HEK293T (cell line): ENCODE measurements at regions of chr1 and their contacts with region 1.

Region 1: DNA sequence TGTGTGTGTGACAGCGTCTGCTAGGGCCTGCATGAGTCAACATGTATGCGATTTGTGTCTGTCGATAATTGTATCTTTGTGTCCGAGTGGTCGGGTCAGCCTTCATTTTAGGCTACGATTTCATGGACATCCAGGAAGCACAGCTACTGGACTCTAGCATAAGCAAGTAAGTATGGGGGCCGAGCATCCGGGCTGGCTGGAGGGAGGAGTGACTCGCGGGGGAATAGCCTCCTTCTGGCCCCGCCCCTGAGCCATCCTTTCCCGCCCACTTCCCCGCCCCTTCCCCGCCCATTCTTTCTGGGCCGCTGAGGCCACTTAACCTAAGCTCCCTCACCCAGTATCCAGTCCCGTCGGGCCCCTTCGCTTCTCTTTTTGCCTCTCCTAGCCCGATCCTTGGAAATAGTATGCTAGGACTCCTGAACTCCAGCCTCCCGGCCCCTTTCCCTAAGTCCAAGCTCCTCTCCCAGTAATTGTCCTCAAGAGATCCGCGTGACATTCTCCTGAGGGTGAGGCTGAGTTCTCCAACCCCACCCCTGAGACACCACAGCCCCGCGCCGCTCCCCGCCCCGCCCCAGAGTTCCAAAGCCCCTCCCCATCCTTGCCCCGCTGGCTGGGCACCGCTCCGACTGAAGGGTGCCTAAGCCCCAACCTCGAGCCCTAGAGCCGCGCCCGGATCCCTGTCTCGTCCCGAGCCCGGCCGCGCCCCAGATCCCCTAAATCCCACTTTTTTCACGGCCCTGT is 1.2 kb downstream of the MAP3K6 start:
- DNase-seq: peak; percentile 90

Region 2: GRCh38 chr1:27321813-27322577 is 43.5 kb before region 1 on chr1 and contains the start of gene TMEM222:
- CTCF ChIA-PET with region 1: no interaction called
- POLR2A ChIA-PET with region 1: interaction called, 13 read pairs
- DNase-seq: peak; percentile 98

Region 3: DNA sequence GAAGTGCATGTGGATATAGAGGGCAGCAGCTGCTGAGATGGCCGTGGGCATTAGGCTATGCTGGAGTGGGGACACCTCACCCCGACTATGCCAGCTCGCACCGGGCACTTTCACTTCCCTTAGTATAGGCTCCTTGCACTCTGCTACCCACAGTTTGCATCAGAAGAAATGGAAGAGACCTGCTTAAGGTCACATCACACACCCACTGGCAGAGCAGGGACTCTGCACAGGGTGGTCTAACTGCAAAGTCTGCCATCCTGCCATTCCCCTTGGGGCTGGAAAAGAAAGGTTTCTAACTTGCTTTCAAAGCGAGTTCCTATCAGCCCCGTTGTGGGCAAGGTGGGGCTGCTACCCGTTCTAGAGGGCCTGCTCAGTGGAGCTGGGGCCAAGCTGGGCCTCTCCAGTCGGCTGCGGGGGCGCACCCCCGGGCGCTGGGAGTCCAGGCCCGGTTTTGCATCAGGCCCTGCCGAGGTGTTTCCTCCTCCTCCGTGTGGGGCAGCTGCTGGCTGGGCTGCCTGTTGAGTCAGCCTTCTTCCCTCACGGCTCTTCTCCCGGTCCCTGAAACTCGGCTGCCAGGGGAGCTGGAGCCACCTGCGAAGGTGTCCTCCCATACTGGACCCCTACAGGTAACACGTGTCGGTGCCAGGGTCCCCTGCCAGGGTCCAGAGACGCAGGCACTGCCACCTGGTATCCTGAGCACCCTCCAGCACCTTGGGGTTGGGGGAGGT is 23.9 kb before region 1 on chr1 and contains the start of gene SYTL1:
- CTCF ChIA-PET with region 1: interaction called, 6 read pairs
- POLR2A ChIA-PET with region 1: interaction called, 24 read pairs
- DNase-seq: peak; percentile 59

Region 4: DNA sequence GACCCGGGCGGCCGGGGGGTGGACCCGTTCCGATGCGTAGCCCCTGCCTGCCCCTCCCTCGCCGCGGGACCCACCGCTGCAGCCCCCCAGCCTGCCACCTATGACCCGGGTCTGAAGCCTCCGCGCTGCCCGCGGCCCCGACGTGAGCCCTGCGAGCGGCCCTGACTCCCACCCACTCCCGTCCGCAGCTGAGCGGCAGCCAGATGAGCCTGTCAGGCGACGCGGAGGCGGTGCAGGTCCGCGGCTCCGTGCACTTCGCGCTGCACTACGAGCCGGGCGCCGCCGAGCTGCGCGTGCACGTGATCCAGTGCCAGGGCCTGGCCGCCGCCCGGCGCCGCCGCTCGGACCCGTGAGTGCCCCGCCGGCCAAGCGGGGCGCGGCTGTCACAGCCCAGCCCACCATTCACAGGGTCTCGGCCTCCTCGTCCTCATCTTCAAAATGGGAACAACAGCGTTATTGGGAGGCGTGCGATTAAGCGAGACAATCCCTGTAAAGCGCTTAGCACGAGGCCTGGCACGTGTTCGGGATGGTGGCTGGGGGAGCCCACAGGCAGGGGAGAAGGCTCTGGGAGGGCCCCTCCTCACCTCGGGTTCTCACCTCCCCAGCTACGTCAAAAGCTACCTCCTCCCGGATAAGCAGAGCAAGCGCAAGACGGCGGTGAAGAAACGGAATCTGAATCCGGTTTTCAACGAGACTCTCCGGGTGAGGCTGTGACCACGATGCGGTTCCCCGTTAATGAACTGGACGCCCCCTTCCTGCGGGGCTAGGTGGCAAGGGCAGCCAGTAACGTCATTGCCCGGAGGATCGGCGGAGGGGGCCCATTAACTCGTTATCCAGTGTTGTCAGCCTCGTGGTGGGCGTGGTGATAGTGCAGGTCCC is 15.5 kb before region 1 on chr1:
- CTCF ChIA-PET with region 1: no interaction called
- POLR2A ChIA-PET with region 1: interaction called, 26 read pairs
- DNase-seq: peak; percentile 83

Region 5: DNA sequence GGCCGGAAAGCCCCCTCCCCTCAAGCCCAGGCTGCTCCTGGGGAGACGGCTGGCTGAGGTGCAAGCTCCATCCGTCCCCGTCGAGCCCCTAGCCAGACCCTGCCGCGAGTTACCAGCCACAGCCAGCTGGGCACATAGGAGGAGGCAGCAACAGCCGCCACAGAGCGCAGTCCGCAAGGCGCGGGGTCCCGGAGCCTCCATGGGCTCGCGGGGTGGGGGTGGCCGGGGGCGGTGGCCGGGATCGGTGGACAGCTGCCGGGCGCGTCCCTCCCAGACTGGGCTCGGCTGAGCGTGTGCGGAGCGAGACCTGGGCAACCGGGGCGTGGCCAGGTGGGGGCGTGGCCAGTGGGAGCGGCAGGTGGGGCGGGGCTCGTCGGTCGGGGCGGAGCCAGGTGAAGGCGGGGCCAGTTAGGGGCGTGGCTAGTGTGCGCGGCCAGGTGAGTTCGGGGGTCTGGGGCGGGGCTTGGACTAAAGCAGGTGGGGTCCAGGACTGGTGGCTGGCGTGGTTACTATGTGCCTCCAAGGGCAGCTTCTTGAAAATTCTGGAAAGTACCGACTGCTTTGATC is 17.6 kb after region 1 on chr1 and contains the start of gene CD164L2:
- CTCF ChIA-PET with region 1: interaction called, 8 read pairs
- POLR2A ChIA-PET with region 1: interaction called, 15 read pairs
- DNase-seq: peak; percentile 49

Region 6: DNA sequence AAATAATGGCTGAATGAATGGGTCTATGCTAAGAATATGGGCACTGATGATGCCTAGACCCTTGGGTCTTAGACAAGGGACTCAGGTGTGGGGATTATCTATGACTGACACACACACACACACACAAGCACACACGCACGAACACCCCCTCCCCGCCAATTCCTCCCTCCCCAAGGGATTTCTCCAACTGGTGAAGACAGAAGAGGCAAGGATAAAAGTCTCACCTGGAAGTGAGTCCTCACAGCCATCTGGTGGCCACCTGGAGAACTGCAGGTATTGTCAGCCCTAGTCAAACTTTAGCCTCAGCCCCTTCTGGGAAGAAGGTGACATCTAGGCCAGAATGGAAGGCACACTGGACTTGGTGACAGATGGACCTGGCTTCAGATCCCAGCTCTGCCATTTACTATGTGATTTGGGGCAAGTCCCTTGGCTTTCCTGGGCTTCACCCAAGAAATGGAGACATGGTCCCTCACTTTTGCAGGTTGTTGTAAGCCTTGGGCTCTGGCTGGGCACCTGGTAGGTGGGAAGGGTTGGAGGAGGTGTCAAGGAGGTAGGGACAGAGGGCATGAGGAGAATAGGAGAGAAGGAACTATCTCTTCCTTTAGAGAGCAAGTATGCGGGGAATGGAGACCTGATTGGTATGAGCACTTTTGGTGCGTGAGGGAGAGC is 22.9 kb after region 1 on chr1:
- CTCF ChIA-PET with region 1: interaction called, 8 read pairs
- POLR2A ChIA-PET with region 1: interaction called, 15 read pairs
- DNase-seq: peak; percentile 64